ENCODE measurements at regions of chr2 and their contacts with region 1.

Region 1: GRCh38 chr2:234500394-234501006 is 3.6 kb upstream of the ARL4C start:
- DNase-seq: peak; percentile 74
- ATAC-seq: peak; percentile 72
- H3K4me3 ChIP-seq: no peak overlapping the region
- H3K27ac ChIP-seq: no peak overlapping the region
- H3K4me1 ChIP-seq: peaks cover 4% of the 10 kb centered on the region
- H3K27me3 ChIP-seq: peaks cover 5% of the 10 kb centered on the region
- CTCF ChIP-seq: peak; percentile 61

Region 2: DNA sequence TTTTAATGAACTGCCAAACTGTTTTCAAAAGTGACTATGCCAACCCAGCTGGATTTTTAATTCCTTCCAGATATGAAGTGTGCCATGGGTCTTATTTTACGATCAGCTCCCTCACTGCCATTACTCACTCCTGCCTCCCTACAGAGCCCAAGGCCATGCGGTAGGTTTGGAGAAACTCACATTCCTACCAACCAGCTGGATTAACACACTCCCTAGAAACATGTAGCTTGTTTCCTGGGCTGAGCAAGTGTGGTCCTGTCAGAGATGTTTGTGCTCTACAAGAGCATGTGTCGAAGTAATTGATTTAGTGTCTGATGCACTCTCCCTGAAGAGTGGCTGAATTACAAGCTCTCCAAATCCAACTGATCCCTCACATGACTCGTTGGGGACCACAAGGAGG is 367.5 kb before region 1 on chr2:
- intact Hi-C with region 1: loop called (anchors 5 kb)
- DNase-seq: no peak
- ATAC-seq: no peak
- H3K4me3 ChIP-seq: no peak overlapping the region
- H3K27ac ChIP-seq: no peak overlapping the region
- H3K4me1 ChIP-seq: peaks cover 7% of the 10 kb centered on the region
- H3K27me3 ChIP-seq: peaks cover 4% of the 10 kb centered on the region
- CTCF ChIP-seq: no peak

Region 3: DNA sequence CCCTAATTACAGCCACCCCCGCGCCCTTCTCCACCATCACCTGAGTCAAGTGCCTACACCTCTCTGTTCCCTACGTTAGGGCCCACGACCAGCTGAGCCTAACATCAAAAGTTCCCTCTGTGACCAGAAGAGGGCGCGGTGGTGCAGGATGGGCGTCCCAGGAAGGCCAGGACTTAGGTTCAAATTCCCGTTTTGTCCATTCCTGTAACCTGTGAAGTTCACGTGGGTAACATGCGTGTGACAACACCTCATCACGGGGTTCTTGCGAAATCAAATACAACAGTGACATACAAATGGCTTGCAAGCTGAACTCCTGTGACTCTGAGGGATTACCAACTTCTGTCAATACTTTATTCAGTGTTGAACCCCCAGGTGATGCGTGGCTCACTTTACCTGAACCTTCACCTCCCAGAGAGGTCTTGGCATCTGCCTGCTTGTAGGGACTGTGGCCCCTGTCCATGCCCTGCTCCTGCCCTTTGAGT is 211.5 kb before region 1 on chr2:
- intact Hi-C with region 1: loop called (anchors 10 kb)
- DNase-seq: peak; percentile 80
- ATAC-seq: peak; percentile 90
- H3K4me3 ChIP-seq: no peak overlapping the region
- H3K27ac ChIP-seq: peak overlapping the region; percentile 62
- H3K4me1 ChIP-seq: peaks cover 29% of the 10 kb centered on the region
- H3K27me3 ChIP-seq: no peaks in the 10 kb centered on the region
- CTCF ChIP-seq: peak; percentile 86

Measured in upper lobe of right lung (tissue), 1 donor.